Right cardiac atrium (tissue), 5 donors: ENCODE measurements at regions of chr10 and their contacts with region 1.

Region 1: DNA sequence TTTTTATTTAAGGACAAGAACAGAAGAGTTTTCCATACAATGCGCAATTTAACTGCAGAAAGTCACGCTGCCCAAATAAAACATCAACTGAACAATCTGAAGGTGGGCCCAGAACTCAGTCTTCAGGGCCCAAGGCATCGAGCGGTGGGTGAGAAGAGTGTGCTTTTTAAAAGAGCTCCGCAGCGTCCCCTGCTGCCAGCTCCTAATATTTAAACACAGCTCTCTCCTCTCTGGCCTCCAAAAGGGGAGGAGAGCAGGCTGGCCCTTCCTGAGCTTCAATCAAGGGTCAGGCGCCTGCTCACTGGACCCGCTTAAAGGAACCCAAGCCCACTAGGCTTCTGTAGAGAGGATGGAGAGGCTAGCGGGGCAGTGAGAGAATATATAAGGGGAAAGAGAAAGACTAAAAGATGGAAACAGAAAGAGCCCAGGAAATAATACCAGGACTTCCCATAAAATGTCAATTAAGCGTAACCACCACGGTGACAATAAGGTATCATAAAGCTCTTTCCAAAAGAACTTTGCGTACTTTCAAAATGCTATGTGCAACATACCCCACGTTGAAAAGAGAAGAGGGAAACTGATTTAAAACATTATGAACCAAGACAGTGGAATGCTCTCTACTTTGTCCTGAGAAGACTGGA is 2.8 kb downstream of the FAM53B start:
- DNase-seq: peak; percentile 88 to 95 (median 91)
- ATAC-seq: peak; percentile 73 to 77
- H3K4me3 ChIP-seq: peak overlapping the region; percentile 79
- H3K27ac ChIP-seq: peak overlapping the region; percentile 83
- H3K4me1 ChIP-seq: peaks cover 21% of the 10 kb centered on the region
- H3K27me3 ChIP-seq: no peaks in the 10 kb centered on the region

Region 2: GRCh38 chr10:124539935-124540641 is 201.3 kb before region 1 on chr10:
- intact Hi-C with region 1: loop called (anchors 2 to 5 kb)
- DNase-seq: peak; percentile 71 to 91 (median 90)
- ATAC-seq: peak; percentile 83 to 84
- H3K4me3 ChIP-seq: no peak overlapping the region
- H3K27ac ChIP-seq: no peak overlapping the region
- H3K4me1 ChIP-seq: no peaks in the 10 kb centered on the region
- H3K27me3 ChIP-seq: no peaks in the 10 kb centered on the region

Region 3: GRCh38 chr10:124619195-124619594 is 122.2 kb before region 1 on chr10:
- intact Hi-C with region 1: no loop called
- DNase-seq: no peak
- ATAC-seq: no peak
- H3K4me3 ChIP-seq: no peak overlapping the region
- H3K27ac ChIP-seq: no peak overlapping the region
- H3K4me1 ChIP-seq: peaks cover 10% of the 10 kb centered on the region
- H3K27me3 ChIP-seq: no peaks in the 10 kb centered on the region

Region 4: DNA sequence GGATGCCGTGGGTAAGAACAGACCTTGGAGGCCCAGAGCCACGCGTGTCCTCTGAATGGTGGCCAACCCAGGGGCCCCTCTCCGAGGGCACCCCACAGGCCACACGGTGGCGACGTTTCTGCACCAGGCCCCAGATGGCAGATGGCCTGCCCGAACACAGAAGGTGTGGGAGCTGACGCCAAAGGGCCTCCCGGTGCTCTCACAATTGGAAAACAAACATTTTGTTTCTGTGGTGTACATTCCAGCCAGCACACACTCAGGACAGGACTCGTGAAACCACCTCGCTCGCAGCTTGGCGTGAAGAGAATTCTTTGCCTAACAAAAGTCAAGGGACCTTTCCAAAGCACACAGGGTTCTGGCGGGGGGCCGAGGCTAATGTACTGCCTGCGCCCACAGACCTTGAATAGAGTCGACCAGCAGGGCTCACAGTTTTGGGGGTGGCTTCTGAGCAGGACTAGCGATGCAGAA is 109.3 kb before region 1 on chr10:
- intact Hi-C with region 1: loop called in 3 of 4 experiments (anchors 5 kb)
- DNase-seq: peak; percentile 68 to 85 (median 80)
- ATAC-seq: peak; percentile 74 to 81
- H3K4me3 ChIP-seq: no peak overlapping the region
- H3K27ac ChIP-seq: peak overlapping the region; percentile 61
- H3K4me1 ChIP-seq: peaks cover 45% of the 10 kb centered on the region
- H3K27me3 ChIP-seq: no peaks in the 10 kb centered on the region

Region 5: DNA sequence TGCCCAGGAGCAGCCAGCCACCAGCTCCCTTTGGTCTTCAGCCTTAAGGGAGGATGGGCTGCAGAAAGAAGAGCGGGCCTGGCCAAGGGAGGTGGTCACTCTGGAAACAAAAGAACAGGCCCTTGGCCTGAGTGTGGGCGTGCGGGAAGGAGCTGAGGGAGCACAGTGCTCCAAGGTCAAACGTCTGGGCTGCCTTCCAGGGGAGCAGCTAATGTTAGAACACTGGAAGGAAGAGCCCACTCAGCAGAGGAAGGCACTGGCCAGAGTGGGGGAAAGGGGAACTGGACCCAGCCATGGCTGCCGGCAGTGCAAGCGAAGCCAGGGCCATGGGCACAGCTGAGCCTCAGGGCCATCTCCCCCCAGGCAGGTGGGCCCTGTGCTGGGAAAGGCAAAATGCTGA is 40.0 kb before region 1 on chr10:
- intact Hi-C with region 1: loop called in 3 of 4 experiments (anchors 5 kb)
- DNase-seq: peak; percentile 96 to 98 (median 97)
- ATAC-seq: peak; percentile 90
- H3K4me3 ChIP-seq: no peak overlapping the region
- H3K27ac ChIP-seq: peak overlapping the region; percentile 99
- H3K4me1 ChIP-seq: peaks cover 78% of the 10 kb centered on the region
- H3K27me3 ChIP-seq: no peaks in the 10 kb centered on the region